ENCODE measurements at regions of chr7 and their contacts with region 1.

Region 1: DNA sequence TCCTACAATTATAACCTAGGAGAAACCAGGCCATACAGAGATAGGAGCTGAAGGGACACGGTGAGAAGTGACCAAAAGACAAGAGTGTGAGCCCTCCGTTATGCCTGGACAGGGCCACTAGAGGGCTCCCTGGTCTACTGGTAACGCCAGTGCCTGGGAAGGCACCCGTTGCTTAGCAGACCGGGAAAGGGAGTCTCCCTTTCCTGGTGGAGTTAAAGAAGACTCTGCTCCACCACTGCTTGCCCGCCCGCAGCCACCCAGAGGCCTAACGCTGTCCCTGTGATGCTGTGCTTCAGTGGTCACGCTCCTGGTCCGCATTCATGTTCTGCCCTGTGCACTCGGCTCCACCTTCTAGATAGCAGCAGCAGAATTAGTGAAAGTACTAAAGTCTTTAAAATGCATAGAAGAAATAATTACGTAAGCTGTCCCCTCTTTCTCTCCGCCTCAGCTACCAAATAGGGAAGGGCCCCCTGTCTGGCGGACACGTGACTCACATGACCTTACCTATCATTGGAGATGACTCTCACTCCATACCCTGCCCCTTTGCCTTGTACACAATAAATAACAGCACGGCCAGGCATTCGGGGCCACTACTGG is 34.8 kb downstream of the GRID2IP start:
- DNase-seq: peak; percentile 17
- H3K4me3 ChIP-seq: no peak overlapping the region; the same call in 1 of the 2 replicates
- CTCF ChIP-seq: peak; percentile 89

Region 2: DNA sequence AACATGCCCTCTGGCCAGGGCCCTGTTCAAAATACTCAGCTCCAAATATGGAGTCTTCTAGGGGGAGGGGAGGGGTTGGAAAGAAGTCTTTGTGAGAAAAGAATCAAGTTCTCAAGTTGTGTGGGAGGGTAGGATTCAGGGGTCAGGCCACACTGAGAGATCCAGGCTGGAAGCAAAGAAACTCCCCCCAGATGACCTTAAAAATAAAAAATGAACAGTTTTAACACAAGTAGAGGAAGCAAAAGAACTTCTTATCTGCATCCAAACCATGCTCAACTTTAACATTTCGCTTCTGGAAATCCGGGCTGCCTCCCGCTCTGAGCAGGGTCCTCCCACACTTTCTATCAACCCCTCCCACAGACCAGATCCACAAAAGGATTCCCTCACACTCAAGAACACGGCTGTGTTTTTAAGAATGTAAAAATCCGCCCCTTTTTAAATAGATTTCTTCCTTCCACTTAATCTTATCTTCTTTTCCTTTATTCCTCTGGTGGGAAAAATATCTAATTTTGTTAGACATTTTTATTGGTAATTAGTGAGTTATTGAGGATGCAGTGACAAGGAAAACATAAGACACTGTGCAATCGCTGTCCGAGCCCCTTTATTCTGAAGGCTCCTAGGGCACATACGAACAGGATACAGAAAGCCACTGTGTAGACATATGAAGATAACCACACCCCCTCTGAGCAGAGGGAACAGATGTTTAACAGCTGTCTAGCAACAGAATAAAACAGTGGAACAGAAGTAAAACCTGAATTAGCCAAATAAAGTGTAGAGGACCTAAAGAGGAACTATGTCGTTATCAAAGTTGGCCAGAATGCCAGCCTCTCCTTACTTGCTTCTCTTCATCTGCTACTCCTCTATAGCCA is 287.9 kb before region 1 on chr7:
- CTCF ChIA-PET with region 1: no interaction called
- POLR2A ChIA-PET with region 1: no interaction called
- DNase-seq: no peak
- H3K4me3 ChIP-seq: no peak overlapping the region; the same call in none of the 2 replicates
- CTCF ChIP-seq: no peak

Region 3: GRCh38 chr7:6338551-6339274 is 177.8 kb before region 1 on chr7:
- CTCF ChIA-PET with region 1: no interaction called
- POLR2A ChIA-PET with region 1: no interaction called
- DNase-seq: no peak
- H3K4me3 ChIP-seq: no peak overlapping the region
- CTCF ChIP-seq: no peak

Region 4: GRCh38 chr7:6476596-6477299 is 39.7 kb before region 1 on chr7:
- CTCF ChIA-PET with region 1: no interaction called
- POLR2A ChIA-PET with region 1: no interaction called
- DNase-seq: no peak
- H3K4me3 ChIP-seq: no peak overlapping the region
- CTCF ChIP-seq: no peak

Region 5: DNA sequence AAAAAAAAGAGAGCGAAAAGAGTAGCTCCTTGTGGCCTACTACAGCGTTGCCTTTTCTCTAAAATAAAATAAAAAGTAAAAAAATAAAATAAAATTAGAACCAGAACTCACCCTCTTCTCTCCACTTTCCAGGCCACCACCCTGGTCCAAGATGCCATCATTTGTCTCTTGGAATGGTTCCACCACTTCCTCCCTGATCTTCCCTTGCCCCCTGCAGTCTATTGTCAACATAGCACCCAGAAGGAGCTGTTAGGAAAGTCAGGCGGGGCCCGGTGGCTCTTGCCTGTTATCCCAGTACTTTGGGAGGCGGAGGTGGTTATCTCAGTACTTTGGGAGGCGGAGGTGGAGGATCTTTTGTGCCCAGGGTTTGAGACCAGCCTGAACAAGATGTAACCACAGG is 42.4 kb after region 1 on chr7:
- CTCF ChIA-PET with region 1: interaction called, 13 read pairs
- POLR2A ChIA-PET with region 1: no interaction called
- DNase-seq: no peak
- H3K4me3 ChIP-seq: no peak overlapping the region
- CTCF ChIP-seq: peak; percentile 49

Region 6: GRCh38 chr7:6577365-6578113 is 61.1 kb after region 1 on chr7 and contains the start of gene ZDHHC4:
- CTCF ChIA-PET with region 1: interaction called, 24 read pairs
- POLR2A ChIA-PET with region 1: no interaction called
- DNase-seq: peak; percentile 33
- H3K4me3 ChIP-seq: peak within 1 kb of the TSS; percentile 74
- CTCF ChIP-seq: no peak

Measured in AG04449 (cell line).